HepG2 (cell line): ENCODE measurements at regions of chr14 and their contacts with region 1.

Region 1: DNA sequence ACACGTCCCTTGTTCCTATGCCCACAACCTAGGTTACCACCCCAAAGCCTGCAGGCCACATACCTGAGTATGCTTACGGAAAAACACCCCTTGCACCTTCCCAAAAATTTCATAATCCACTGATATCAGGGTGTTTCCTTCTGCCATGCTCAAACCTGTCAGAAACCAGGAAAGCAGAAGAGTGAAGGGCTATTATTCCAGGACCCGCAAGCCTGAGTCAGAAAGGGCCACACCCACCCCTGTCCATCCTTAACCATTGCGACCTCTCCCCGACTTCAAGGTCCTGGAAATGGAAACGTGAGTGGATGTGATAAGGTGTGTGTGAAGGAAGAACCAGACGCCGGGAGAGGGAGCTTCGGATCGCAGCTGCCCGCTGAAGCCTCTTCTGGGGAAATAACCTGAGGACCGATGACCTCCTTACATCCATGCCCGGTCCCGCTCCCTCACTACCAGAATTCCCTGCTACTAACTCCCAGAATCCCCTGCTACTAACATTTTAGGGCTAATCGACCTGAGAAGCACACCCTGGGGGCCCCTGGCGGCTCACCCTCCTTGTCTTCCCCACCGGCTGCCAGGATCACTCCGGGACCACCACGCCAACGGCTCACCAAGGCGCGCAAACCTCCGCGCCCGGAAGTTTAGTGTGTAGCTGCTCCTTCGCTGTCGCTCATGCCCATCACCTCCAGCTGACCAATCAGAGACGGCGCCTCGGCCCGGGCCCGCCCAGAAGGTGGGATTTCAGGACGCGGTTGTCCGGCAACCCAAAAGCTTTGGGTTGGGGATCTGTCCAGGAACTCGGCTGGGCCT is at the start of gene ACYP1:
- DNase-seq: peak; percentile 82
- ATAC-seq: peak; percentile 99
- H3K4me3 ChIP-seq: peak within 1 kb of the TSS; percentile 73 to 86 (median 77)
- H3K27ac ChIP-seq: peak within 1 kb of the TSS; percentile 37
- H3K4me1 ChIP-seq: peaks cover 35% of the 10 kb centered on the region
- H3K27me3 ChIP-seq: no peaks in the 10 kb centered on the region; a peak in 1 of 5 replicates
- CTCF ChIP-seq: no peak
- EP300 ChIP-seq: no peak
- POLR2A ChIP-seq: peak in 1 of 2 experiments; percentile 78; a peak in 2 of 4 replicates
- RAD21 ChIP-seq: peak; percentile 34; the same call in 1 of the 2 replicates
- total RNA-seq, gene ACYP1: 9.7 and 11.1 TPM in 2 replicates

Region 2: DNA sequence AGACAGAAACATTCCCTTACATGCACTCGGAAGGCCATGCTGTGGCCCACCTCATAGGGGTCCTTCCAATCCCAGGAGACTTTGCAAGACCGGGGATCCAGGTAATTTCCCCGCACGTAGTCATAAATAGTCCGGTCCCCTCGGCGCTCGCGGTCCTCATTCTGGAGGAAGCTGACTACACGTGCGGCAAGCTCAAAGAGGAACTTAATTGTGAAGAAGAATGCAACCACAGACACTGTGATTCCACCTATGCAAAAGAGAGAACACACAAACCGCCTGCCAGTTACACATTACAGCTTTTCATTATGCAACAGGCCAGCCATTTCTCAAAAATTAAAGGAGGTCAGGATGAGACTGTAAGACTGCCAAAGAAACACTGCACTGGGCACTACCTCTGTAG is 379.2 kb before region 1 on chr14:
- CTCF ChIA-PET with region 1: no interaction called
- POLR2A ChIA-PET with region 1: no interaction called
- in situ Hi-C with region 1: no loop called
- intact Hi-C with region 1: no loop called
- DNase-seq: no peak
- ATAC-seq: no peak
- H3K4me3 ChIP-seq: no peak overlapping the region
- H3K27ac ChIP-seq: no peak overlapping the region
- H3K4me1 ChIP-seq: peaks cover 12% of the 10 kb centered on the region
- H3K27me3 ChIP-seq: no peaks in the 10 kb centered on the region
- CTCF ChIP-seq: no peak
- EP300 ChIP-seq: no peak
- POLR2A ChIP-seq: no peak
- RAD21 ChIP-seq: no peak

Region 3: DNA sequence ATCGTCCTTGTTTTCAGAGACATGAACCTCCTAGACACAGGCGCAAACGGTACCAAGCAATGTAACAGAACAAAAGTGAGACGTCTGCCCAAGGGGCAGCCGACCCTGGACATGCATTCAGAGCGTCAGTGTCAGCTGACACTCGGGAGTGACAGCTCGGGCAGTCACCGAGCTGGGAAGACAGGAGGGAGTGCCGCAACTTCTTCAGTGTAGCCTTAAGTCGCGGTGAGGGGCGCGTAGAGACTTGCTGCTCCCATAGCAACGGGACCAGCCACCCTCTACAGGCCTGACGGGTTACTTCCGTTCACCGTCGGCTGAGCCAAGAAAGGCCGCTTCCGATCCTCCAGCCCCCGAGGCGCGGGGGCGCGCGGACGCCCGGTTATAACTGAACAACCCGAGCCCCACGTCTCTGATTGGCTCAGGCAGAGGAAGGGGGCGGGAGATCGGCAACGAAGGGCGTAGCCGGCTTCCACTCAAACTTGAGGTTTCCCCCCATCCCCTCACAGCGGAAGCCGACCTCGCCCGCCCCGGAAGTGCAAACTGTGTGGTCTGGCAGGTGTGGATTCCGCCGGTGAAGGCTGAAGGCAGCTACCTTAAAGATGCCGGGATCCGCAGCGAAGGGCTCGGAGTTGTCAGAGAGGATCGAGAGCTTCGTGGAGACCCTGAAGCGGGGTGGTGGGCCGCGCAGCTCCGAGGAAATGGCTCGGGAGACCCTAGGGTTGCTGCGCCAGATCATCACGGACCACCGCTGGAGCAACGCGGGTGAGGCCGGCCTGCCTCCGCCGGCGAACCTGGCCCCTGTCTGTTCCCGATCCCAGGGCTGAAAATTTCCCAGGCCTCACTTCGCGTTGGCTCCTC is 61.0 kb before region 1 on chr14 and contains the start of gene EIF2B2:
- CTCF ChIA-PET with region 1: no interaction called
- POLR2A ChIA-PET with region 1: no interaction called
- in situ Hi-C with region 1: no loop called
- intact Hi-C with region 1: loop called (anchors 10 kb)
- DNase-seq: peak; percentile 93
- ATAC-seq: peak; percentile 98
- H3K4me3 ChIP-seq: peak within 1 kb of the TSS; percentile 82 to 97 (median 92)
- H3K27ac ChIP-seq: peak within 1 kb of the TSS; percentile 62
- H3K4me1 ChIP-seq: peaks cover 17% of the 10 kb centered on the region
- H3K27me3 ChIP-seq: no peaks in the 10 kb centered on the region; a peak in 1 of 5 replicates
- CTCF ChIP-seq: peak; percentile 53
- EP300 ChIP-seq: no peak
- POLR2A ChIP-seq: peak; percentile 29 to 72
- RAD21 ChIP-seq: no peak
- total RNA-seq, gene EIF2B2: 54.4 and 80.9 TPM in 2 replicates

Region 4: DNA sequence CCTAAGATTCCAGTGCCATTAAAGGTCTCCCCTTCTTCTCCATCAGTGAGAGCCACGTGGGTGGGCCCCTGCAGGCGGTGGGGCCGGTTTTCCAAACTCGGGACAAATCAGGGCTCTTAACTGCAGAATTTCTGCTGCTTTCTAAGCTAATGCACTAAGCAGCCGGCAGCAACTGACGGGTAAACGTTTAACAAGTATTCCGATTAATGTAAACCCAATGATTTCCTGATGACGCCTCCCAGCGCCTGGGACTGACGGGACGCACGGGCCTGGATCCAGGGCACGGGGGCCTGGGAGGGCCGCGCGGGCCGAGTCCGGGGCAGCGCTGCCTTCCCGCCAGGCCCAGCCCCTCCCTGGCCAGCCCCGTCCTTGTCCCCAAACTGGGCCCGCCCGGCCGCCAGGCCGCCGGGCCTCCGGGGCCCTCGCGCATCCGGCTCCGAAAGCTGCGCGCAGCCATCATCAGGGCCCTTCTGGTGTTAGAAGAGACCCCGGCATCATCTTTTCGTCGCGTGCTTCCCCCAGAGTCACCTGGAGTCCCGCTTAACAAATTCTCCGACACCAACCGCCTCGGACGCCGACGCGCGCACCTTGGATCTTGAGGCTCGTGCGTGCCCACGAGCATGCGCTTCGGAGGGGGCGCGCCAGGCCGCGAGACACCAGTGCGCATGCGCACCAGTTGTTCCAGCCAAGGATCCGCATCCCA is 12.6 kb before region 1 on chr14 and contains the start of gene MLH3:
- CTCF ChIA-PET with region 1: no interaction called
- POLR2A ChIA-PET with region 1: interaction called, 18 read pairs
- in situ Hi-C with region 1: no loop called
- intact Hi-C with region 1: no loop called
- DNase-seq: peak; percentile 75
- ATAC-seq: peak; percentile 94
- H3K4me3 ChIP-seq: peak within 1 kb of the TSS; percentile 58 to 75 (median 68)
- H3K27ac ChIP-seq: peak within 1 kb of the TSS; percentile 81
- H3K4me1 ChIP-seq: peaks cover 35% of the 10 kb centered on the region
- H3K27me3 ChIP-seq: no peaks in the 10 kb centered on the region
- CTCF ChIP-seq: 0 out of 2 replicates have a peak, but pooled peaks have one; percentile 16
- EP300 ChIP-seq: peak in 1 of 2 experiments; percentile 31; a peak in 1 of 4 replicates
- POLR2A ChIP-seq: peak; percentile 72 to 75
- RAD21 ChIP-seq: 0 out of 2 replicates have a peak, but pooled peaks have one; percentile 48
- total RNA-seq, gene MLH3: 24.5 and 24.8 TPM in 2 replicates

Region 5: GRCh38 chr14:75109877-75110276 is 46.3 kb after region 1 on chr14:
- CTCF ChIA-PET with region 1: no interaction called
- POLR2A ChIA-PET with region 1: no interaction called
- in situ Hi-C with region 1: no loop called
- intact Hi-C with region 1: no loop called
- DNase-seq: no peak
- ATAC-seq: no peak
- H3K4me3 ChIP-seq: no peak overlapping the region
- H3K27ac ChIP-seq: no peak overlapping the region
- H3K4me1 ChIP-seq: no peaks in the 10 kb centered on the region
- H3K27me3 ChIP-seq: no peaks in the 10 kb centered on the region
- CTCF ChIP-seq: no peak
- EP300 ChIP-seq: no peak
- POLR2A ChIP-seq: no peak
- RAD21 ChIP-seq: no peak